Heart right ventricle (tissue), 16 donors: ENCODE measurements at regions of chr9 and their contacts with region 1.

Region 1: GRCh38 chr9:32703635-32704034 is 68.2 kb upstream of the TAF1L start:
- DNase-seq: no peak
- ATAC-seq: no peak
- H3K4me3 ChIP-seq: no peak overlapping the region
- H3K27ac ChIP-seq: no peak overlapping the region
- H3K4me1 ChIP-seq: no peaks in the 10 kb centered on the region
- H3K27me3 ChIP-seq: peaks cover 0 to 14% (median 0%) of the 10 kb centered on the region in 7 donors
- CTCF ChIP-seq: no peak

Region 2: DNA sequence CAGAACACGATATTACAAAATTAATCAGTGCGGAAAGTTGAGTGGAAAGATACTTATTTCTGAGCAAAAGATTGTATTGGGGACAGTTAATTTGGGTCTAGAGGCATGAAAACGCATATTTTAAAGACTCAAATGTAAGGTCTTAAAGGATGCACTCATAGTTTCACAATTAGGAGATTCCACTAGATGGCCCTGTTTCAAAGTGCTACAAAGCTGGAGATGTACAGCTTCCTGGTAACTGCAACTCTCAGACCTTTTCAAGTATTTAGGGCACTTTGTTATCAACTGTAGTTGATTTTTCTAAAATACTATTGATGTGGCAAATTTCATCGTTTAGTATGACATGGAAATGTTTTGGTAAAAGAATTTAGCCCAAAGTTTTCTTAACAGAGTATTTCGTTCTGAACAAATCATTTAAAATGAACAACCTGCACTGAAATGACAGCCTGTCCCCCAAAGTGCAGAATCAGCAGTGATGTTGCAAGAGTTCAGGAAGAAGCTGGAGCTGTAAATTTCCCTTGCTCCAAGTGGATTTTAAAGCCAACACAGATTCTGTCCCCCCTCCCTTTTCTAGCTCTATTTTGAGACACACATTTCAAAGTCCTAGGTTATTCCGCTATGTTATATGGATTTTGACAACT is 114.4 kb before region 1 on chr9:
- intact Hi-C with region 1: no loop called
- DNase-seq: no peak
- ATAC-seq: peak in 1 of 8 donors; percentile 55
- H3K4me3 ChIP-seq: no peak overlapping the region
- H3K27ac ChIP-seq: no peak overlapping the region
- H3K4me1 ChIP-seq: no peaks in the 10 kb centered on the region
- H3K27me3 ChIP-seq: peaks cover 0 to 25% (median 17%) of the 10 kb centered on the region in 7 donors
- CTCF ChIP-seq: peak in 7 of 9 donors; percentile 38 to 63 (median 48)

Region 3: DNA sequence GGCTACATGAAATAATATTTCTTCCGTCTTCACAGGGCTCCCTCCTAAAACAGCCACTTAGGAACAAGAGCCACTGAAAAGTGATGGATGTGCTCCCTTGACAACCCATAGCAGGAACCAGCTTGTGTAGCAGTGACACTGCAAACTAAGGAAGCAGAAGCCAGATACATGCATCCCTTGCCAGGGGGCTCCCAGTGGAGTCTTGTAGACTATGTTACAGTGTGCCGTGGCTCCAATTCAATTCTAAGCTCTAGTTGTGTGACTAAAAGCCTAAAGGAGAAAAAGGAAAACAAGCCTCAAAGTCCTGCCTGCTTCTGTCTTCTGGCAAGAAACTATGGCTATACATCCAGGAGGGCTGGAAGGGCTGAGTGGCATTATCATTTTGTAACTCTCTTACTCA is 56.0 kb before region 1 on chr9:
- intact Hi-C with region 1: loop called in 1 of 10 experiments (anchors 10 kb)
- DNase-seq: no peak
- ATAC-seq: no peak
- H3K4me3 ChIP-seq: no peak overlapping the region
- H3K27ac ChIP-seq: no peak overlapping the region
- H3K4me1 ChIP-seq: no peaks in the 10 kb centered on the region
- H3K27me3 ChIP-seq: peaks cover 0 to 4% (median 0%) of the 10 kb centered on the region in 7 donors
- CTCF ChIP-seq: no peak